PC-3 (cell line): ENCODE measurements at regions of chr16 and their contacts with region 1.

Region 1: GRCh38 chr16:2829501-2830356 is at the start of gene ZG16B:
- DNase-seq: peak; percentile 69
- ATAC-seq: peak; percentile 97
- H3K4me3 ChIP-seq: no peak within 1 kb of the TSS; the same call in 1 of the 2 replicates
- H3K27ac ChIP-seq: peak within 1 kb of the TSS; percentile 71
- H3K4me1 ChIP-seq: peaks cover 12% of the 10 kb centered on the region
- H3K27me3 ChIP-seq: no peaks in the 10 kb centered on the region
- CTCF ChIP-seq: no peak
- total RNA-seq, gene ZG16B: 8.6 and 17.0 TPM in 2 replicates

Region 2: GRCh38 chr16:2777231-2777902 is 52.4 kb before region 1 on chr16 and contains the start of gene ELOB:
- CTCF ChIA-PET with region 1: no interaction called
- POLR2A ChIA-PET with region 1: no interaction called
- intact Hi-C with region 1: loop called (anchors 10 kb)
- DNase-seq: peak; percentile 73
- ATAC-seq: peak; percentile 92
- H3K4me3 ChIP-seq: peak within 1 kb of the TSS; percentile 98
- H3K27ac ChIP-seq: peak within 1 kb of the TSS; percentile 92
- H3K4me1 ChIP-seq: peaks cover 20% of the 10 kb centered on the region
- H3K27me3 ChIP-seq: no peaks in the 10 kb centered on the region
- CTCF ChIP-seq: no peak
- total RNA-seq, gene ELOB: 203 and 289 TPM in 2 replicates

Region 3: DNA sequence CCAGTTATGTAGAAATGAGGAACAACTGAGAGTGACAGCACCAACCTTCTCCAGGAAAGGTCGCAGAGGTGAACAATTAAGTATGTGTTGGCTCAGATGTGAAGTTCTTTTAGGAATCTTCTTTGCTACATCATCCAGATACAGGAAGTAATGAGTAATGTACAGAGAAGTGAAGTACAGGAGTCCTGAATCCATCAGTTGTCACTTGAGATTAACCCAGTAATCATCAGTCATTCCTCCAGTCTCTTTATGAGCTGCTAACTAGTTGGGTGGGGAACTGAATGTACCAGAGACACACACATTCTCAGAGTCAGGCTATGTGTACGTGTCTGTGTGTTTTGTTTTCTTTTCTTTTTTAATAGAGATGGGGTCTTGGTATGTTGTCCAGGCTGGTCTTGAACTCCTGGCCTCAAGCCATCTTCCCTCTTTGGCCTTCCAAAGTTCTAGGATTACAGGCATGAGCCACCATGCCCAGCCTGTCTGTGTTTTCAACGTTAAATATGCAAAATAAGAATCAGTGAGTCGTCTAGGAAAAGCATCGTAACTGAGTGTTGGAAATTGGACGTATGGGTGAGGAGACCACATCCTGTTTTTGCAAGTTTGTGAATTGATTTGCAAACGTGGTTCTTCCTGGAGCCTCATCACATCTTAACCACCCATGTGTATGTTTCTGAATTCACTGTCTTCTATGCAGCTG is 385.3 kb after region 1 on chr16:
- CTCF ChIA-PET with region 1: no interaction called
- POLR2A ChIA-PET with region 1: no interaction called
- intact Hi-C with region 1: no loop called
- DNase-seq: no peak
- ATAC-seq: no peak
- H3K4me3 ChIP-seq: no peak overlapping the region
- H3K27ac ChIP-seq: no peak overlapping the region
- H3K4me1 ChIP-seq: no peaks in the 10 kb centered on the region
- H3K27me3 ChIP-seq: peaks cover 12% of the 10 kb centered on the region; the same call in 1 of the 2 replicates
- CTCF ChIP-seq: no peak